ENCODE measurements at regions of chr4 and their contacts with region 1.

Region 1: GRCh38 chr4:93334003-93334402 is 494.6 kb upstream of the ATOH1 start:
- DNase-seq: no peak
- ATAC-seq: no peak
- H3K4me3 ChIP-seq: no peak overlapping the region
- H3K4me3 Mint-ChIP-seq: no peak overlapping the region
- H3K27ac ChIP-seq: no peak overlapping the region
- H3K27ac Mint-ChIP-seq: no peak overlapping the region
- H3K4me1 ChIP-seq: no peaks in the 10 kb centered on the region
- H3K4me1 Mint-ChIP-seq: no peaks in the 10 kb centered on the region
- H3K27me3 ChIP-seq: no peaks in the 10 kb centered on the region
- H3K27me3 Mint-ChIP-seq: no peaks in the 10 kb centered on the region

Region 2: DNA sequence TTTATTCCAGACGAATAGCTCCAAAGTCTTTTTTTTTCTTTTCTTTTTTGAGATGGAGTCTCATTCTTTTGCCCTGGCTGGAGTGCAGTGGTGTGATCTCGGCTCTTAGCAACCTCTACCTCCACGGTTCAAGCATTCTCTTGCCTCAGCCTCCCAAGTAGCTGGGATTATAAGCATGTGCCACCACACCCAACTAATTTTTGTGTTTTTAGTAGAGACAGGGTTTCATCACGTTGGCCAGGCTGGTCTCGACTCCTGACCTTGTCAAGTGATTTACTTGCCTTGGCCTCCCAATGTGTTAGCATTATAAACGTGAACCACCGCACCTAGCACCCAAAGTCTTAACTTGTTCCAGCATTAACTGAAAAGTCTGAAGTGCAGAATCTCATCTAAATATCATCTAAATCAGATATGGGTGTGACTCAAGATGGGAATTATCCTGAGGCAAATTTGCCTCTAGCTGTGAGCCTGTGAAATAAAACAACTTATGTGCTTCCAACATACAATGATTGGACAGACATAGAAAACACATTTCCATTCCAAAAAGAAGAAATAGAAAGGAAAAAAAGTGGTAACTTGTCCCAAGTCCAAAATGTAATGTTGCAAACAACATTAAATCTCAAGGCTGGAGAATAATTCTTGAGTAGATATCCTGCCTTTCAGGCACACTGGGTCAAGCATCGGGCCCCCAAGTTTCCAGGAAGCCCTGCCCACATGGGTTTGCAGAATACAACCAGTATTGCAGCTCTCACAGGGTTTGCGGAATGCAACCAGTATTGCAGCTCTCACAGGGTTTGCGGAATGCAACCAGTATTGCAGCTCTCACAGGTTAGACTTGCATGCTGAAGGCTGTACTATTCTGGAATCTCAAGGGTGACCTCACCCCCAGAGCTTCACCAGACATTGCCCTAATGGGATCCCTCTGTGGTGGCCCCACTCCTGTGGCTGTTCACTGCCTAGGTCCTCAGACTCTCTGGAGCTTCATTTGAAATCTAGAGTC is 146.5 kb before region 1 on chr4:
- CTCF ChIA-PET with region 1: no interaction called
- POLR2A ChIA-PET with region 1: interaction called in 1 of 2 experiments, 10 read pairs
- DNase-seq: no peak
- ATAC-seq: no peak
- H3K4me3 ChIP-seq: no peak overlapping the region
- H3K4me3 Mint-ChIP-seq: no peak overlapping the region
- H3K27ac ChIP-seq: no peak overlapping the region
- H3K27ac Mint-ChIP-seq: no peak overlapping the region
- H3K4me1 ChIP-seq: no peaks in the 10 kb centered on the region
- H3K4me1 Mint-ChIP-seq: no peaks in the 10 kb centered on the region
- H3K27me3 ChIP-seq: no peaks in the 10 kb centered on the region
- H3K27me3 Mint-ChIP-seq: no peaks in the 10 kb centered on the region

Region 3: DNA sequence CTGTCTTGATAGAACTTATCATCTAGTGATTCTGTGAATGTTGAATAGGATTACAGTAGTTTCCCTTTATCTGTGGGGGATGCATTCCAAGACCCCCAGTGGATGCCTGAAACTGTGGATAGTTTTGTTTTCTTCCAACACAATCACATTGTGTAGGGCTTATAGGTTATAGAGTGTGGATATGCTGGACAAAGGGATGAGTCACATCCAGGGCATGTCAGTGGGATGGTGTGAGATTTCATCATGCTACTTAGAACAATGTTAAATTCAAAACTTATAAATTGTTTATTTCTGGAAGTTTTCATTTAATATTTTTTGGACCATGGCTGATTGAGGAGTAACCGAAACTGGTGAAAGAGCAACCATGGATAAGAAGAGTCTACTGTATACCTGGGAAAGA is 62.3 kb after region 1 on chr4:
- CTCF ChIA-PET with region 1: no interaction called
- POLR2A ChIA-PET with region 1: no interaction called
- DNase-seq: no peak
- ATAC-seq: no peak
- H3K4me3 ChIP-seq: no peak overlapping the region
- H3K4me3 Mint-ChIP-seq: no peak overlapping the region
- H3K27ac ChIP-seq: no peak overlapping the region
- H3K27ac Mint-ChIP-seq: no peak overlapping the region
- H3K4me1 ChIP-seq: no peaks in the 10 kb centered on the region
- H3K4me1 Mint-ChIP-seq: no peaks in the 10 kb centered on the region
- H3K27me3 ChIP-seq: no peaks in the 10 kb centered on the region
- H3K27me3 Mint-ChIP-seq: no peaks in the 10 kb centered on the region

Measured in T-cell (primary cell).